B cell (primary cell): ENCODE measurements at regions of chr11 and their contacts with region 1.

Region 1: DNA sequence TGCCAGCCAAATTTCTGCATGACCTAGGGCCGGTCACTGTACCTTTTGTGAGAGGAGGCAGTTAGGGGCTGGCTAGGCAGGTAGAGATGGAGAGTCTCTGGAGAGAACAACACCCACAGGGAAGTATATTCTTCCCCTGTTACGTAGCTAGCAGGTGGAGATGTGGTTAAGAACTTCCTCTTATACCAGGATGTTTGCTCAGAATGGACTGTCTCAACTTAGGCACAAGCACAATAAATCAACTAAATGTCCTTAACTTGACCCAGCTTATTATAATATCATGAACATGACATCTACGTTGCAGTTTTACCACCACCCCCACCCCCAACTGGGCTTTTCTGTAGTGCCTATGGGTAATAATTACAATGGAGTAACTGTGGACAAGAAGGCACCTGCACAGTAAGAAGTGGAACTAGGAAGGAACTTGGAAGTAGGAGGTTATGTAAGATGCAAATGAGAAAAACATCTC is 60.7 kb upstream of the MPEG1 start:
- DNase-seq: peak; percentile 88
- ATAC-seq: peak; percentile 85
- H3K4me3 ChIP-seq: peak overlapping the region in 1 of 5 experiments; percentile 44
- H3K4me3 Mint-ChIP-seq: peak overlapping the region; percentile 83
- H3K27ac ChIP-seq: peak overlapping the region; percentile 90 to 94
- H3K27ac Mint-ChIP-seq: peak overlapping the region; percentile 95
- H3K4me1 ChIP-seq: peaks cover 76 to 85% of the 10 kb centered on the region in 2 donors
- H3K4me1 Mint-ChIP-seq: peaks cover 92% of the 10 kb centered on the region
- H3K27me3 ChIP-seq: no peaks in the 10 kb centered on the region
- H3K27me3 Mint-ChIP-seq: no peaks in the 10 kb centered on the region
- CTCF ChIP-seq: no peak

Region 2: DNA sequence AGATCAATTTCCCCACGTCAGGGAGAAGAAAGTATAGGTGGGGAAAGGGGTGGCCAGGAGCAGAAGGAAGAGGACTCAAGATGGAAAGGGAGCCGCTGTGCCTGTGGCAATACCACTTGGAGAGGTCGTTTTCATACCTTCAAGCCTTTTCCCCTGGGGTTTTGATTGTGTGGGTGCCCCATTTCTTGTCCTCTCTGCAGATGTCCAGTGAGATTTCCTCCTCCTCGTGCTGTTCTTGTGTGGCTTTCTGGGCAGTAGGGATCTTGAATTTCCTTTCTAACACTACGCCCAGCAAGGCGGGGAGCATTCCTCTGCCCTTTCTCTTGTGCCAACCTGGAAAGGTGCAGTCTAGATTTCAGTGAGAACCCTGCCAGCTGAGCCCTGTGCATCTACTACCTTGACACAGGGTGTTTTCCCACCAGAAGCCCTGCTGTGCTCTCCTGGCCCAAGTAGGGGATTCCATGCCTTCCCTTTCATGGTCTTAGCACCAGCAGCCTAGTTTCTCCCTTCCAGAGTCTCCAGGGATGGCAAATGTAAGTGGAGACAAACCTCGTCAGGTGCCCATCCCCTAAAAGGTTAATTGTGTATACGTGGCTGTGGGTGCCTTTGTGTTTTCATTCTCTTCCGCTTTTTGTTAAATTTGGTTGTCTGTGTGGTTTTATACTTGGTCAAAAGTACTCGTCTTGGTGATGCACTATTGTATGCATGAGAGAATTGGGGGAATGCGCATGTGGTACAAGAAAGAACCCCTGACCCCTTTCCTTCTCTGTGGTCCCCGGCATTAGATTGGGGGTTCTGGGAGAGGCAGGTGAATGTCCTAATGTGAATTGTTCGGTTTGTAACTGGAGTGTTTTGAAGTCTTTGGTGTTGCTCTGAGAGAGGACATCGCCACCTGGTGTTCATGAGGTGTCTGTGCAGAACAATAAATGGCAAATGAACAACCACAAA is 10.7 kb after region 1 on chr11:
- CTCF ChIA-PET with region 1: interaction called, 19 read pairs
- POLR2A ChIA-PET with region 1: interaction called, 6 read pairs
- intact Hi-C with region 1: loop called (anchors 1 kb)
- DNase-seq: peak; percentile 92
- ATAC-seq: peak; percentile 83
- H3K4me3 ChIP-seq: peak overlapping the region in 4 of 5 experiments; percentile 25 to 49 (median 34)
- H3K4me3 Mint-ChIP-seq: peak overlapping the region; percentile 80
- H3K27ac ChIP-seq: peak overlapping the region; percentile 75 to 89
- H3K27ac Mint-ChIP-seq: peak overlapping the region; percentile 91
- H3K4me1 ChIP-seq: peaks cover 30 to 51% of the 10 kb centered on the region in 2 donors
- H3K4me1 Mint-ChIP-seq: peaks cover 63% of the 10 kb centered on the region
- H3K27me3 ChIP-seq: no peaks in the 10 kb centered on the region
- H3K27me3 Mint-ChIP-seq: no peaks in the 10 kb centered on the region
- CTCF ChIP-seq: peak; percentile 89